Activated T-helper 1 cell treated with anti-CD3 and anti-CD28 coated beads, Interleukin-12 subunit alpha, Interleukin-12 subunit beta, Interleukin-2, Interleukin-4 antibody, amounts not matched to agents 30 ng/mL and 10 ng/mL and 1 ng/mL, durations not matched to agents 14 hours and 24 hours and 36 hours (primary cell): ENCODE measurements at regions of chr5 and their contacts with region 1.

Region 1: DNA sequence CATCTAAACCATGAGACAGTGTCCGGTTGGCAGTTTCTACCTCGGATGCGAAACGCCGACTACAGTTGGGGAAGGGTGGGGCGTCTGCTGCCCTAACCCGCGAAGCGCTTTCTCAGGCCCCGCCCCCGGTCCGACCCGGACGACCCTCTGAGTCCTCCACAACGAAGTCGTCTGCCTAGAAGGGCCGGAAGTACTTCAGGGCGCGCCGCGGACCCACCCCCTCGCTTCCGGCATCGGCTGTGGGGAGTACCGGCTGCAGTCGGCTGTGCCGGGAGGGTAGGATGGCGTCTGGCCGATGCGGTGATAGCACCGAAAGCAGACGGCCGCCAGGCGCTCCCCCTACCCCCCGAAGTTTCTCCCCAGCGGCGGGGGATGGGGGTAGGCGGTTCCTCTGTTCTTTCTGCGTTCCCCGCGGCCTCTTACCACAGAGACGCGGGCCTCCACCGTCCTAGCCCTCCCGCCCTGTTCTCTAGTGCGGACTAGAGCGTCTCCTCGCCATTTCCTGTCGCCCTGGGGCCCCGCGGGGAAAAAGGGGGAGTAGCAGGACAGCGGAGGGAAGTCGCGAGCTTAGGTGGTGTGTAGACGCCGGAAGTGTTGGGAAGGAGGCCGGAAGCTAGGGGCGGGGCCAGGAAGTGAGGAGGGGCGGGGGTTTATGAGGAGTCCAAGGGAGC is at the start of gene TRIM41:
- DNase-seq: peak; percentile 97
- H3K4me3 Mint-ChIP-seq: peak within 1 kb of the TSS; percentile 95
- H3K27ac Mint-ChIP-seq: peak within 1 kb of the TSS; percentile 98
- H3K4me1 Mint-ChIP-seq: peaks cover 64% of the 10 kb centered on the region
- H3K27me3 Mint-ChIP-seq: peaks cover 9% of the 10 kb centered on the region
- total RNA-seq, gene TRIM41: 31.8 and 34.8 TPM in 2 replicates

Region 2: GRCh38 chr5:180810210-180810958 is 412.8 kb before region 1 on chr5:
- intact Hi-C with region 1: loop called (anchors 1 kb)
- DNase-seq: peak; percentile 91
- H3K4me3 Mint-ChIP-seq: peak overlapping the region; percentile 84
- H3K27ac Mint-ChIP-seq: peak overlapping the region; percentile 99
- H3K4me1 Mint-ChIP-seq: peaks cover 78% of the 10 kb centered on the region
- H3K27me3 Mint-ChIP-seq: peaks cover 2% of the 10 kb centered on the region

Region 3: DNA sequence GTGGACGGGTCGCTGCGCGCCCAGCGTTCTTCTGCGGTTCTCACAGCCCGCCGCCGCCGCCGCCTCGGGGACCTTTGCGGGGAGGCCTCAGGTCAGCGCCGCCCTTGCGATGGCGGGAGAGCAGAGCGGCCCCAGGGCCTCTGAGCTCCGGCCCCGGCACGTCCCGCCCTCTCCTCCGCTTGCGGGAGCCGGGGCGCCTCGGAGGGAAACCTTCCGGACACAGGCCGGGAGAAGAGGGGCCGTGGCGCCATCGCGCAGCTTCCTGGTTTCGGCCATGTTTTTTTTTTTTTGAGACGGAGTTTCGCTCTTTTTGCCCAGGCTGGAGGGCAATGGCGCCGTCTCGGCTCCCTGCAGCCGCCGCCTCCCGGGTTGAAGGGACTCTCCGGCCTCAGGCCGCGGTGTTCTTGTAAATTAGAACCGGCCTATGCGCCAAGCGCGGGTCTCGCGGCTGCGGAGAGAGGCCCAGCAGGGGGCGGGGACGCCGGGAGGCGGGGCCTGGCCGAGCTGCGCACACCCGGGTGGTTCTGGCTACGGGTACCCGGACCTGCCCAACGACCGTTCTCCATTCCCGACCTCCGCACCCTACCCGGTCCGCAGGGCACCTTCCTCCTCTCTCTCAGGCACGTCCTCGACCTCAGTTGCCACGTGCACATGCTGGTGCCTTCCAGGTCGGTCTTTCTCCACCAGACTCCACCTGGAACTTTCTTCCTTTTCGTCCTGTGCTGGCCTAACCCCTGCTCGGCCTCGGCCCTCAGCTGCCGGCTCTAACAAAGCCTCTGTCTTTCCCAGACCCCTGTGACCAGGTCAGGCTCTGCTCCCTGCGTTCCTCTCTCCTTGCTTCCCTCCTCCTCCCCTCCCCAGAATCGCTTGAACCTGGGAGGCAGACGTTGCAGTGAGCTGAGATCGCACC is 391.8 kb before region 1 on chr5:
- intact Hi-C with region 1: loop called (anchors 1 kb)
- DNase-seq: peak; percentile 76
- H3K4me3 Mint-ChIP-seq: peak overlapping the region; percentile 91
- H3K27ac Mint-ChIP-seq: peak overlapping the region; percentile 99
- H3K4me1 Mint-ChIP-seq: peaks cover 33% of the 10 kb centered on the region
- H3K27me3 Mint-ChIP-seq: no peaks in the 10 kb centered on the region

Region 4: DNA sequence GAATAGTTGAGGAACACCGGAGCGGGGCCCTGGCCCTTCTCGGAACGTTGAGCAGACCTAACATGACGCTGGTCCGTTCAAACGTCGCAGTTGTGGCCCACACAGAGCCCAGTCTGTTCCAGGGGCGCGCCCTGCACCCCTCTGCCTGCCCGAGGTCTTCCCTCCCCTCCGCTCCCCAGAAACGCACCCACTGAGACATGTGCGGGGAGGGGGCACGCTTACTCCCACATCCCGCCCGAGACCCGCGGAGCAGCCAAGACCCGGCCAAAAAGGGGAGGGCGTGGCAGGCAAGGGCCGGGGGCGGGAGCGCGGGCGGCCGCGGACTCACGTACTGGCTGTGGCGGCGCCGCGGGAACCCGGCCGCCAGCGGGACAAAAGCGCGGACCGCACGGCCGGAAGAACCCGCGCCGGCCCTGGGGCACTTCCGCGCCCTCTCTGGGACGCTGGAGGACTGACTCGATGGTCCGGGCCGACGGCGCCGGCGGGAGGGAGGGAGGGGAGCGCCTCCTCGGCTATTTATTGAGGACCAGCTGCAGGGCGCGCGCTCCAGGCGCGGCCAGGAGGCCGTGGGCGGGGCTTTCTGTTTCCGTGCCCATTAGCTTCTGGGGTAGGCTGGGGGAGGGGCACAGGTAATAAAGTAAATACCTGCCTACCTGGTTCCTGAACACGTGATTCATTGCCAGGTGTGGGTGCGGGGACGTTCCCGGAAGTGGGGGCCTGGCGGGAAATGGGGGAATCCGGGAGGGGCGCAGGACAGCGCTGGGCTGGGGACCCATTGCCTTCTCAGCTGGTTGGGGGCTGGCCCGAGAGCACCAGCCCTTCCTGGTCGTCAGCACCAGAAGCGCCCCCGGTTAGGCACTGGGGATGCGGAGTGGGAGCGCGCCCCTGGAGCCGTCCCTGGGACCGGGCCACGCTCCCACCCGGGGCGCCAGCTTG is 362.0 kb before region 1 on chr5 and contains the start of gene ZFP62:
- intact Hi-C with region 1: loop called (anchors 2 kb)
- DNase-seq: peak; percentile 82
- H3K4me3 Mint-ChIP-seq: peak within 1 kb of the TSS; percentile 90
- H3K27ac Mint-ChIP-seq: peak within 1 kb of the TSS; percentile 91
- H3K4me1 Mint-ChIP-seq: peaks cover 18% of the 10 kb centered on the region
- H3K27me3 Mint-ChIP-seq: peaks cover 4% of the 10 kb centered on the region
- total RNA-seq, gene ZFP62: 28.4 and 28.5 TPM in 2 replicates

Region 5: GRCh38 chr5:181191529-181192394 is 31.4 kb before region 1 on chr5:
- intact Hi-C with region 1: loop called (anchors 1 kb)
- DNase-seq: peak; percentile 94
- H3K4me3 Mint-ChIP-seq: peak overlapping the region; percentile 94
- H3K27ac Mint-ChIP-seq: peak overlapping the region; percentile 96
- H3K4me1 Mint-ChIP-seq: peaks cover 43% of the 10 kb centered on the region
- H3K27me3 Mint-ChIP-seq: peaks cover 8% of the 10 kb centered on the region

Region 6: DNA sequence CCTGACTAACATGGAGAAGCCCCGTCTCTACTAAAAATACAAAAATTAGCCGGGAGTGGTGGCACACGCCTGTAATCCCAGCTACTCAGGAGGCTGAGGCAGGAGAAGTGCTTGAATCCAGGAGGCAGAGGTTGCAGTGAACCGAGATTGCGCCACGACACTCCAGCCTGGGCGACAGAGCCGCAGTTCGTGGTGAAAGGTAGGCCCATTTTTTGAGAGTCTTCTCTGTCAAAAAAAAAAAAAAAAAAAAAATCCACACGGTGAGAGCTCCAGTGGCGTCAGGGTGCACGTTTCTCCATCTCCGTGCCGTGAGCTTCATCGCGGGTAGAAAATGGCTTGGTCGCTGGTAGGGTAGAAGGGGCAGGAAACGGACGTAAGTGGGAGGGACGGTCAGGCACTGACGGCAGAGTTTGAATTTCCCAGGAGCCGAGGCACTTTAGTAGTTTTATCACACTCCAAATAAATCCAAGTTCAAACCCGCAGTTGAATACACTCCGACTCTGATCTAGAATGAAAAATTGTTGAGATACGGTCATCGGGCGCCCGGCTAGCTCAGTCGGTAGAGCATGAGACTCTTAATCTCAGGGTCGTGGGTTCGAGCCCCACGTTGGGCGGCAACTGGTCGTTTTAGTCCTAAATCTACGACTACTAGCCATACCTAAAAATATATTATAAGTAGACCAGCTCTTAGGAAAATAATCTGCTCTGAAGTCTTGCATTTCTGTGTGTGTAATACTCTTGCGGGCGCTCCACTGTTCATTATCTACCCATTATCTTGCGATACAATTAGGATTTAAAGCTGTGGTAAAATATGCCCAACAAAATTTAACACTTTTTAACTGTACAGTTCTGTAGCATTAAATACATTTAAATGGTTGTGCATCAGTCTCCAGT is 15.7 kb before region 1 on chr5:
- intact Hi-C with region 1: loop called (anchors 1 kb)
- DNase-seq: peak; percentile 59
- H3K4me3 Mint-ChIP-seq: peak overlapping the region; percentile 89
- H3K27ac Mint-ChIP-seq: peak overlapping the region; percentile 95
- H3K4me1 Mint-ChIP-seq: peaks cover 34% of the 10 kb centered on the region
- H3K27me3 Mint-ChIP-seq: peaks cover 28% of the 10 kb centered on the region

Region 7: GRCh38 chr5:181243512-181244343 is 20.5 kb after region 1 on chr5 and contains the start of gene RACK1:
- intact Hi-C with region 1: loop called (anchors 1 kb)
- DNase-seq: peak; percentile 82
- H3K4me3 Mint-ChIP-seq: peak within 1 kb of the TSS; percentile 96
- H3K27ac Mint-ChIP-seq: peak within 1 kb of the TSS; percentile 99
- H3K4me1 Mint-ChIP-seq: peaks cover 49% of the 10 kb centered on the region
- H3K27me3 Mint-ChIP-seq: no peaks in the 10 kb centered on the region
- total RNA-seq, gene RACK1: 2,098 and 2,121 TPM in 2 replicates